ENCODE measurements at regions of chr1 and their contacts with region 1.

Region 1: DNA sequence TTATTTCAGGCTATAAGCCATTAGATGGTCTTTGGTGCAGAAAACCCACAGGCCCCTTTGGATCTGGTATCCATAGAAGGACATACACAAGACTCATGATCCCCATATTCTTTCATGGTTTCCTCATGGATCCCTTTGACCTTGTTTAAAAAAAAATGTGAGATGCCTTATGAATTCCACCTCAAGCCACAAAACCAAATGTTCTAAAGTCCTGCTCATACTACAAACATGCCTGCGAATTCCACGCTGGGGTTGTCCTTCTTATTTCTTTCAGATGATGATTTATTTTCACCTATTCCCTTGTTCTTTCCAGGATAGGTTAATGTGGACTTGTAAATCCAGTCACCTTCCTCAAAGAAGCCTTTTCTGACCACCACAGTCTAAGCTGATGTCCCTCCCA is 256.9 kb upstream of the DPYD start:
- DNase-seq: no peak
- H3K4me3 ChIP-seq: no peak overlapping the region
- H3K27ac ChIP-seq: no peak overlapping the region
- H3K4me1 ChIP-seq: peaks cover 7% of the 10 kb centered on the region
- H3K27me3 ChIP-seq: no peaks in the 10 kb centered on the region
- CTCF ChIP-seq: no peak

Region 2: DNA sequence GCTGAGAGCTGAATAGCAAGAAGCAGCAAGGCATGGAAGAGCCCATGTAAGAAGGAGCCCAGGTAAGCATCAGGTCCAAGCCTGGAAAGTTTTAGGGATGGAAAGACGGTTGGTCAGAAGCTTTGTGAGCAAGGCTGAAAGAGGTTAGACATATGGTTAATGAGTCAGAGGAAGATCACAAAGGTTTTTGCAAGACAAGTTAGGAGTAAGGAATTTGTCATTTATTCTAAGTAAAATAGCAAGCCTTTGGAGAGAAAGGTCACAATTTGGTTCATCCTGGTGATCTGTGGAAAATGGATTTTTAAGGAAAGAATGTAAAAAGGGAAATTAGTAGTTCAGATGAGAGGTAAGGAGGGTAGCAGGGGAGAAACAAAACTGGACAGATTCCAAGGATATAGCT is 363.6 kb before region 1 on chr1:
- CTCF ChIA-PET with region 1: no interaction called
- POLR2A ChIA-PET with region 1: no interaction called
- intact Hi-C with region 1: no loop called
- DNase-seq: no peak
- H3K4me3 ChIP-seq: no peak overlapping the region
- H3K27ac ChIP-seq: no peak overlapping the region
- H3K4me1 ChIP-seq: no peaks in the 10 kb centered on the region
- H3K27me3 ChIP-seq: no peaks in the 10 kb centered on the region
- CTCF ChIP-seq: no peak

Region 3: GRCh38 chr1:98119796-98120195 is 58.0 kb before region 1 on chr1:
- CTCF ChIA-PET with region 1: no interaction called
- POLR2A ChIA-PET with region 1: no interaction called
- intact Hi-C with region 1: loop called (anchors 10 kb)
- DNase-seq: peak; percentile 49
- H3K4me3 ChIP-seq: no peak overlapping the region
- H3K27ac ChIP-seq: no peak overlapping the region
- H3K4me1 ChIP-seq: no peaks in the 10 kb centered on the region
- H3K27me3 ChIP-seq: no peaks in the 10 kb centered on the region
- CTCF ChIP-seq: no peak

Region 4: DNA sequence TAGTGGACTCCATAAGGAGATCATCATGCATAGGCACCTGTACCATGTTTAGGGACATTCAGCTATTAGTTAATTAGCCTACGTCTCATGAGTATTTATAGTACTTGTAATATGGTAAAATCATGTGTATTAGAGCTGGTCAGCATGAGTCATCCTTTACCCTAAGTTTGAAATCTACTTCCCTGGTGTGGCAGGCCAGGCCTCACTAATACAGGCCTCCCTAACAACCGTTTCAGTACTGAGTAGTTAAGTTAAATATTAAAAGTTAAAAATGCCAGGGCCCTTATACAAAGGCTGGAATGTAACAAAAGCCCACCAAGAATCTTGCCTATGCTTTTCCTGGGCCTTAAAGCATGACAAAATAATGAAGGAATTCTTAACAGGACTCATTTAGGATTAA is 99.4 kb after region 1 on chr1:
- CTCF ChIA-PET with region 1: no interaction called
- POLR2A ChIA-PET with region 1: no interaction called
- intact Hi-C with region 1: no loop called
- DNase-seq: no peak
- H3K4me3 ChIP-seq: no peak overlapping the region
- H3K27ac ChIP-seq: no peak overlapping the region
- H3K4me1 ChIP-seq: no peaks in the 10 kb centered on the region
- H3K27me3 ChIP-seq: no peaks in the 10 kb centered on the region
- CTCF ChIP-seq: no peak